Left lung (tissue), 14 donors: ENCODE measurements at regions of chr1 and their contacts with region 1.

Region 1: DNA sequence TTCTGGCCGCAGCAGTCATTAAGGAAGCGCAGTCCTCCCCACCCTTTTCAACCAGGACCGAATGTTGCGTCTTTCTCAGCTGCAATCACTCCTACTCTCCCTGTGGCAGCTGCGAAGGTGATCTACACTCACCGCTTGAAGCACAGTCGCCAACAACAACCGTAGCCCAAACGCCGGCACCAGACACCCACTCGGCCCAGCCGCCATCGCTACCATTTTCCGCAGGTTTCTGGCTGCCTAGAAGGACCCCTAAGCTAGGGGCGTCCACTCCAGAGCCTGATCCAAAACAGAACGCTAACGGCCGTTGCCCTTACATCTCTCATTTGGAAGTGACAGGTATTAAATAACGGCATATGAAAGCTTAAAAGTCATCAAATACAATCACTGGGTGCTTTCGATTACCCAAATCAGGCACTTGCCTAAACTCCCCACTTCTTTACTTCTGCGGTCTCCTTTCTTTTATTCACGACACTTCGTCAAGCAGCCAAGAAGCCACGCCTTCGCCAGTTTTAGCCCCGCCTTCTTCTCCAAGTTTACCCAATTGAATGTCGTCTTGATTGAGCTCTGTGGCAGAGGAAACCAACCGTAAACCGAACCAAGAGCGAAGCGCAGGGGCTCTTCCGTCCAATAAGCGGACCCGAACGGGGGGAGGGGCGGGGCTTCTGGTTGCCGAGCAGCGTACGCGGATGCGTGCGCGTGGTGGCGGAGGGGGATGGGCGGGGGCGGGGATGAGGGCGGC is at the start of gene SELENOF:
- DNase-seq: peak; percentile 88 to 100 (median 100)
- ATAC-seq: peak; percentile 95
- H3K4me3 ChIP-seq: peak within 1 kb of the TSS; percentile 66 to 91
- H3K27ac ChIP-seq: peak within 1 kb of the TSS; percentile 95
- H3K4me1 ChIP-seq: peaks cover 7 to 36% of the 10 kb centered on the region in 2 donors
- H3K27me3 ChIP-seq: no peaks in the 10 kb centered on the region
- CTCF ChIP-seq: no peak
- polyA plus RNA-seq, gene SELENOF: 217 to 297 (median 270) TPM

Region 2: GRCh38 chr1:86704458-86704971 is 209.6 kb before region 1 on chr1 and contains the start of gene SH3GLB1:
- intact Hi-C with region 1: loop called in 1 of 2 experiments (anchors 5 kb)
- DNase-seq: peak; percentile 92 to 98 (median 93)
- ATAC-seq: peak; percentile 91
- H3K4me3 ChIP-seq: peak within 1 kb of the TSS; percentile 77 to 94
- H3K27ac ChIP-seq: peak within 1 kb of the TSS; percentile 99 to 100
- H3K4me1 ChIP-seq: peaks cover 11 to 50% of the 10 kb centered on the region in 2 donors
- H3K27me3 ChIP-seq: no peaks in the 10 kb centered on the region
- CTCF ChIP-seq: peak; percentile 95 to 98
- polyA plus RNA-seq, gene SH3GLB1: 92.7 to 112 (median 101) TPM

Region 3: GRCh38 chr1:86841116-86841515 is 72.9 kb before region 1 on chr1:
- intact Hi-C with region 1: no loop called
- DNase-seq: no peak
- ATAC-seq: no peak
- H3K4me3 ChIP-seq: no peak overlapping the region
- H3K27ac ChIP-seq: peak overlapping the region in 1 of 2 donors; percentile 6
- H3K4me1 ChIP-seq: no peaks in the 10 kb centered on the region
- H3K27me3 ChIP-seq: no peaks in the 10 kb centered on the region
- CTCF ChIP-seq: no peak